ENCODE measurements at regions of chr17 and their contacts with region 1.

Region 1: GRCh38 chr17:44689477-44690217 is at the start of gene CCDC43:
- DNase-seq: peak; percentile 81 to 98 (median 91)

Region 2: GRCh38 chr17:44708401-44709181 is 18.9 kb after region 1 on chr17 and contains the start of gene DBF4B:
- intact Hi-C with region 1: loop called (anchors 2 kb)
- DNase-seq: peak; percentile 68 to 95 (median 76)

Region 3: DNA sequence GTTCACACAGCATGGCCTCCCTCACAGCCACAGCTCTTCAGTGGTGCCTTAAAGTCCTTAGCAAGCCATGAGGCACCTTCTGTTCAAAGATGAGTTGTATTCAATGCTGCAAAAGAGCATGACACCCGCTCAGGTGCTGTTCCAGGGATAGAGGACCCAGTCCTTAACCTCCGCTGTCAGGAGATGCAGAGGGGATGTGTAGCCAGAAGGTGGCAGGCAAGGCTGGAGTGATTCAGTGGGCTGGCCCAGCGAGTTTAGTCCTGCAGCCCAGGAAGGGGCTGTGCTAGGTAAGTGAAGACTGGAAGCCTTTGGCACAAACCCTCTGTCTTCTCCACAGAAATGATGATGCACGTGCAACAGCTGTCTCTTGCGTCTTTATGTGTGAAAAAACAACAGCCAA is 44.1 kb after region 1 on chr17:
- intact Hi-C with region 1: no loop called
- DNase-seq: peak in 5 of 10 donors; percentile 22 to 90 (median 50)